Cardiac septum (tissue), 1 donor: ENCODE measurements at regions of chr9 and their contacts with region 1.

Region 1: GRCh38 chr9:13351778-13352386 is 72.4 kb upstream of the MPDZ start:
- DNase-seq: no peak

Region 2: DNA sequence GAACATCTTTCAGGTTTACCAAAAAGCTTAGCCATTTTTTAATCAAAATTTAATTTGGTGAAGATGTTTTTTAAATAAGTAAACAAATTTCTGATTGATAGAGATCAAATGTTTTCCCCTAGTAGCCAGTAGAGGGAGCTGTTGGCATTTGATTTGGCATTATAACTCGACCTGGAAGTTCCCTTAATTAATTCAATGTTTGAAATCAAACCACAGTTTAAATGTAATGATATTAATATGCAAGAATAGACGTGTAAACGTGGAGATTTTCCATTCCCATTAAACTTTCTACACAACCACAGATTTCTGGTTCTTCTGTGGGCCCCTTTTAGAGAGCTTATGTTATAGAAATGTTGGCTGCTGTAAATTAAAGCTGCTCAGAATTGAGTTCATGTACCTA is 75.7 kb after region 1 on chr9:
- intact Hi-C with region 1: loop called (anchors 5 kb)
- DNase-seq: no peak

Region 3: GRCh38 chr9:13437866-13438265 is 86.0 kb after region 1 on chr9:
- intact Hi-C with region 1: no loop called
- DNase-seq: no peak

Region 4: DNA sequence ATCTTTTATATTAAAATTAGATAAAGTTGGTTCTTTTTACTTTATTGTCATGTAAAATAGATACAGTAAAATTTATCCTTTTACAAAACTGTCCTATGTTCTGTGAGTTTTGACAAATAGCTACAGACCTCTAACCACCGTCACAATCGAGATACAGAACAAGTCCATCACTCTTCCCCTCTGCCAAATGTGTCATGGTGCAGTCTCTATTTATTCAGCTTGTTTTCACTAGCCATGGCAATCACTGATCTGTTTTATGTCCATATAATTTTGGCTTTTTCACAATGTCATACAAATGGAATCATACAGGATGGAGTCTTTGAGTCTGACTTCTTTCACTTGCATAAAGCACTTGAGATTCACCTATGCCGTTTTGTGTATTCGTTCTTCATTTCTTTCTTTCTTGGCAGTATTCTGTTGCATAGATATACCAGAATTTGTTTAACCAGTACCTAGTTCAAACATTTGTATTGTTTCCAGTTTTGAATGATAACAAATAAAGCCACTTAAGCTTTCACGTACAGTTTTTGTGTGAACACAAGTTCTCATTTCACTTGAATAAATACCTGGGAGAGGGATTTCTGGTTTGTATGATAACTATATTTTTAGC is 200.8 kb after region 1 on chr9:
- intact Hi-C with region 1: no loop called
- DNase-seq: no peak

Region 5: DNA sequence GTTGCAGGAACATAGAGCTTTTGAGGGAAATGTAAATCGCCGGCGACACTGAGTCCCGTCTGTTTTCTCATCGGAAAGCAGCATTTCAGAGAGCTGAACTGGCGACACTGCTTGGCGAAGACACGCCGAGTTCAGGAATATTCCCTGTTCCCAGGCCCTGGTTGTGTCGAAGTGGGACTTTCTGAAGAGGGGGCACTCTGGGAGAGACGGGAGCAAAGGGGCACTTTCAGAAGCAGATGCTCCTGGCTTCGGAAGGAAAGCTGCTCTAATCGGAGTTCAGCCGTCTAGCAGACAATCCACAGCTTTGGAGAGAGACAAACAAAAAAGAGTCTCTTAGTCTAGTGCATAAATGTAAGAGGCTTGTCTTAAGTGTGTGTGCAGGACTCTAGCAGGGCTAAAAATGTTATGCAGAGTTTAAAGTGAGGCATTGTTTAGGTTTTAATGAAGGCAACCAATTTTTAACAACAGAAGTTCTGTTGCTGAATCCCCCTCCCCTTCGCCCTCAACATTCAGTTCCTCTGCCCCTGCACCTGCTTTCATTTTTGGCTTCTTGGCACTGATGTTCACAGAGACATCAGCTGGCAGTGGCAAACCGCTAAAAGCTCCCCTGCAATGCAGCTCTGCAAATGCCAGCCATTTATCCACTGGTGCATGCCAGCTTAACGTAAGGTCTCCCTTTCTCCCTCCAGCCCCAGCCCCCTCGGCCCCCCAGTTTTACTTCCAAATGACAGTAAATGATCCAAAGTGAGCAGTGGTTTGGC is 217.1 kb after region 1 on chr9:
- intact Hi-C with region 1: loop called (anchors 10 kb)
- DNase-seq: no peak

Region 6: DNA sequence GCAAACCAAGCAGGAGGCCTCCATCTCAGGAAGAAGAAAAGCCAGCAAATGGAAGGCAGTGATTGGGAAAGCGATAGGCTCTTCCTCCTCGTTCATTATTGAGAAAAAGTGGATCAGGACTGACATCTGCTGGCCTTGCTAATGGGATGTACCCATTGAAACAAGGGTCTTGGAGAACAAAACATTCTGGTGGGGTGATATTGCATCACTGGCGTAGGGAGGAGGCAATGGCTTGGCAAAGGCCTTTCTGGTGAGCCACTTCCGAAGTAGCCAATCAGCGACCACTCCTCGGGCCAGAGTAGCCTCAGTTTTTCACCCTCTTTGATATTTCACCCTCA is 1048.7 kb after region 1 on chr9:
- intact Hi-C with region 1: loop called (anchors 5 kb)
- DNase-seq: no peak